CD14-positive monocyte (primary cell): ENCODE measurements at regions of chr3 and their contacts with region 1.

Region 1: DNA sequence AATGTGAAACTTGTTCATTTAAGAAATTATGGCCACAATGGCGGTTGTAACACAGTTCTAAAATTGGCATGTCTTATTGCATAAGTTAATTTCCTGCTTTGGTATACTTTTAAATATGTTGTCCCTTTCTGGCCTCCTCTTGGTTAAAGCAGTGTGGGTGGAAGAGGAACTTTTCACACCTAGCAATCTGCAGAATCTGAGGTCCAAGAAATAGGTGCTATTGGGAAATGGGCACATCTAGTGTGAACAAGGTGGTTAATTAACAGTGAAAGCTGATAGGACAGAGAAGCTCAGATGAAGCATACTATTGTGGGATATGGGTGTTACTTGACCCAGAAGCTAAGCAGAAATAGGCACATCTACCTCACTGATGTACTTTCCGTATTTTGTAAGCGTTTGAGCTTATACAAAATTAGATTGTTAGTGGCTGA is 10.6 kb downstream of the CMC1 start:
- DNase-seq: peak in 2 of 3 donors; percentile 21 to 34
- H3K4me3 ChIP-seq: peak overlapping the region in 2 of 3 experiments; percentile 12 to 46
- H3K4me3 Mint-ChIP-seq: peak overlapping the region; percentile 62 to 73
- H3K27ac ChIP-seq: peak overlapping the region in 1 of 2 donors; percentile 78
- H3K27ac Mint-ChIP-seq: peak overlapping the region; percentile 63 to 90 (median 85)
- H3K4me1 ChIP-seq: peaks cover 40 to 50% of the 10 kb centered on the region in 2 donors
- H3K4me1 Mint-ChIP-seq: peaks cover 55% of the 10 kb centered on the region
- H3K27me3 ChIP-seq: no peaks in the 10 kb centered on the region
- H3K27me3 Mint-ChIP-seq: no peaks in the 10 kb centered on the region
- CTCF ChIP-seq: no peak

Region 2: DNA sequence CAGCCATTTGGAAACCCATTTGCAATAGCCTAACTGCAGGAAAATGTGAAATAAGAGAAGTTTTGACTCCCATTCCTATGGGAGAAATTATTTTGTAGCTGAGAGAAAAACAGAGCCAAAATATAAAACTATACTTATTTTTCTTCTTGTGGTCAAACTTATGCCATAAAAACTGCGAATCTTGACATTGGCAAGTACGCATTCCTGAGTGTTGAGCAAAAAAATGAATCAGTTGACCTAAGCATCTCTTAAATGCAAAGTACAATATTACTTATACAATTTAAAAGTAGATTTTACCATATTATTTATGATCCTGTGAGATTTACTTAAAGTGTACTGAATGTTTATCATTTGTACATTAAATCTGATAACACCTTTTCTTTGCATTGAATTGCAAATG is 60.7 kb before region 1 on chr3:
- intact Hi-C with region 1: no loop called
- DNase-seq: no peak
- H3K4me3 ChIP-seq: no peak overlapping the region
- H3K4me3 Mint-ChIP-seq: no peak overlapping the region
- H3K27ac ChIP-seq: no peak overlapping the region
- H3K27ac Mint-ChIP-seq: no peak overlapping the region
- H3K4me1 ChIP-seq: no peaks in the 10 kb centered on the region
- H3K4me1 Mint-ChIP-seq: peaks cover 3% of the 10 kb centered on the region
- H3K27me3 ChIP-seq: no peaks in the 10 kb centered on the region
- H3K27me3 Mint-ChIP-seq: peaks cover 0 to 3% (median 0%) of the 10 kb centered on the region in 3 donors
- CTCF ChIP-seq: no peak

Region 3: DNA sequence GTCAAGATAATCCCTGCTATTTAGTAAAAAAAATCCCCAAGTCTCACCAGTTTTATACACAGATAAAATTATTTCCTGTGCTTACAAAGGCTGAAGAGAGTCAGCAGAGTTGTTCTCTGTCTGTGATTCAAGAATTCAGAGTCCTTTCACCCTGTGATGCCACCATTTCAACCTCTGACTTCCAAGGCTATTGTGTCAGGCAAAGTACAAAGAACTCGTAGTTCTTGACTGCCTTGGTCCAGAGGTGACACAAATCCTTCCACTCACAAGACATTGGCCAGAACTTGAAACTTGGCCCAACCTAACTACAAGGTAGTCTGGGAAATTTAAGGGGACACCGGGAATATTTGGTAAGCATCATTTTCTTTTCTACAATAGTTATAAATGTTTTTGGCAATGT is 45.5 kb before region 1 on chr3:
- intact Hi-C with region 1: no loop called
- DNase-seq: no peak
- H3K4me3 ChIP-seq: no peak overlapping the region
- H3K4me3 Mint-ChIP-seq: no peak overlapping the region
- H3K27ac ChIP-seq: no peak overlapping the region
- H3K27ac Mint-ChIP-seq: no peak overlapping the region
- H3K4me1 ChIP-seq: no peaks in the 10 kb centered on the region
- H3K4me1 Mint-ChIP-seq: no peaks in the 10 kb centered on the region
- H3K27me3 ChIP-seq: no peaks in the 10 kb centered on the region
- H3K27me3 Mint-ChIP-seq: peaks cover 0 to 3% (median 0%) of the 10 kb centered on the region in 3 donors
- CTCF ChIP-seq: no peak

Region 4: DNA sequence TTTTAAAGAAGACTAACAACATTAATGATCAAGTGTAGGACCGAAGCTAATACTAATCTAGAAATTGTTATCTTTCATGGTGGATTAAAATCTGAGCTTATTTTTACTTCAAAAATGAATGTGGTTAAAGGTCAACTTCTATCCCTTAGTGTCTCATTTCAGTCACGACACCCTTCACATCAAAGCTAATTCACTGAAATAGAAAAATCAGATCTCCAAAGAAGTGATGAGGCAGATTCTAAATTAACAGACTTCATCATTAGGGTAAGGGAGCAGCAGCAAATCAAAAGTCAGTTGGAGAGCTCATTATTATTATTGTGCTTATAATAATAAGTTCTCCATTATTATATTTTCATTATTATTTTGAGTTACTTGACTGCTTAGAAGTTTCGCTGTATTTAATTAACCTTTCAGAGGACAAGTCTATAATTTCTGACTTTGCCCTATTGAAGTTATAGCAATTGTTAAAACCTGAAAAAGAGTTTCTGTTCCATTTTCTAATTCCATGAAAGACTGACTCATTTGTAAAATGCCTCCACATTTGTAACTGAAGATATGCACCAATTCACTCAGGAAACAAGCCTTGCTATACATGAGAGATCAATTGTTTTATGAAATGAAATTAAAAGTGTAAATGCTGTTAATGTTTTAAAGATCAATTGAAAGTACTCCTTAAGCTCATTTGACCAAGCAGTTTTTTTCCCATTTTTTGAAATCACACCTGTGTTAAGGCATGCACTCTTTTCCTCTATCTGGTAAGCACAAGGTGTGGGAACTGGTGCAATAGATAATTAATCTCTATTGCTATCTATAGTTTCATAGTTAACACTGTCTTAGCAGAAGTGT is 33.7 kb before region 1 on chr3:
- intact Hi-C with region 1: no loop called
- DNase-seq: no peak
- H3K4me3 ChIP-seq: no peak overlapping the region
- H3K4me3 Mint-ChIP-seq: no peak overlapping the region
- H3K27ac ChIP-seq: no peak overlapping the region
- H3K27ac Mint-ChIP-seq: no peak overlapping the region
- H3K4me1 ChIP-seq: no peaks in the 10 kb centered on the region
- H3K4me1 Mint-ChIP-seq: no peaks in the 10 kb centered on the region
- H3K27me3 ChIP-seq: no peaks in the 10 kb centered on the region
- H3K27me3 Mint-ChIP-seq: peaks cover 0 to 4% (median 2%) of the 10 kb centered on the region in 3 donors
- CTCF ChIP-seq: no peak

Region 5: DNA sequence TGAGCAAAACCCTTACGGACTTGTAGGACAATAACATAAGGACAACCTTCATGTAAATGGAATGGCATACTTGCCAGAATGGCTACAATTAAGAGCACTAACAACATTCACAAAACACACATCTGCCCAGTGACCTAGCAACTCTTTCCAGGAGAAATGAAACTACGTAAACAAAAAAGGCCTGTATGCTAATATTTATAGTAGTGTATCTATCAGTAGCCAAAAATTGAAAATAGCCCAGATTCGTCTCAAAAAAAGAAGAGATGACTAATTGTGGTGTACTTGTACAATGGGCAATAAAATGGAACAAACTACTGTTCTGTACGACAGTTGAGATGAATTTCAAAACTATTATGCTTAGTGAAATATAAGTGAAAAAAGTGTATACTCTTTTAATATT is 27.8 kb after region 1 on chr3:
- intact Hi-C with region 1: no loop called
- DNase-seq: no peak
- H3K4me3 ChIP-seq: no peak overlapping the region
- H3K4me3 Mint-ChIP-seq: no peak overlapping the region
- H3K27ac ChIP-seq: no peak overlapping the region
- H3K27ac Mint-ChIP-seq: no peak overlapping the region
- H3K4me1 ChIP-seq: no peaks in the 10 kb centered on the region
- H3K4me1 Mint-ChIP-seq: peaks cover 10% of the 10 kb centered on the region
- H3K27me3 ChIP-seq: no peaks in the 10 kb centered on the region
- H3K27me3 Mint-ChIP-seq: peaks cover 0 to under 1% (median 0%) of the 10 kb centered on the region in 3 donors
- CTCF ChIP-seq: no peak

Region 6: DNA sequence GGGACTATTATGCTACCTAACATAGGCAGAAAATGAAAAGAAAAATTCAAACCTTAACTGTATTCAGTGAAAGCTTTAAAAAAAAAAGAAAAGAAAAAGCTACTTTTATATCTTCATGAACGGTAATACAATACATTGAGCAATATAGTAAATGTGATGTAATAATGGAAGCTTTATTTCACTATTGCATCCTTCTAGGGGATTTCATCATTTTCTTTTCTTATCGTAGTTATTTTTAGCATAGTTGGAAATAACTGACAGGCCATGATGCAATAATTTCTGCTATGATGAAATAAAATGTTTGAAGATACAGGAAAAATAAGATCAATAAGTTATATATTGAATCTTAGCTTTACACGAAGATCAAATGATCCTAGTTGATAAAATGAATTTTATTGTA is 56.2 kb after region 1 on chr3:
- intact Hi-C with region 1: loop called in 1 of 2 experiments (anchors 10 kb)
- DNase-seq: peak; percentile 45 to 81 (median 74)
- H3K4me3 ChIP-seq: peak overlapping the region in 1 of 3 experiments; percentile 54
- H3K4me3 Mint-ChIP-seq: peak overlapping the region; percentile 13 to 63
- H3K27ac ChIP-seq: peak overlapping the region in 1 of 2 donors; percentile 70
- H3K27ac Mint-ChIP-seq: peak overlapping the region; percentile 78 to 93 (median 84)
- H3K4me1 ChIP-seq: peaks cover 6 to 10% of the 10 kb centered on the region in 2 donors
- H3K4me1 Mint-ChIP-seq: peaks cover 12% of the 10 kb centered on the region
- H3K27me3 ChIP-seq: no peaks in the 10 kb centered on the region
- H3K27me3 Mint-ChIP-seq: no peaks in the 10 kb centered on the region
- CTCF ChIP-seq: no peak

Region 7: GRCh38 chr3:28348629-28349483 is 96.8 kb after region 1 on chr3 and contains the starts of genes AZI2 and ZCWPW2:
- intact Hi-C with region 1: loop called in 1 of 2 experiments (anchors 5 kb)
- DNase-seq: peak; percentile 88 to 93 (median 92)
- H3K4me3 ChIP-seq: peak within 1 kb of the TSS; percentile 86 to 99 (median 94)
- H3K4me3 Mint-ChIP-seq: peak within 1 kb of the TSS; percentile 89 to 94
- H3K27ac ChIP-seq: peak within 1 kb of the TSS; percentile 100
- H3K27ac Mint-ChIP-seq: peak within 1 kb of the TSS; percentile 98 to 100 (median 100)
- H3K4me1 ChIP-seq: peaks cover 29 to 51% of the 10 kb centered on the region in 2 donors
- H3K4me1 Mint-ChIP-seq: peaks cover 36% of the 10 kb centered on the region
- H3K27me3 ChIP-seq: no peaks in the 10 kb centered on the region
- H3K27me3 Mint-ChIP-seq: peaks cover 0 to 2% (median 1%) of the 10 kb centered on the region in 3 donors
- CTCF ChIP-seq: no peak
- polyA plus RNA-seq, gene AZI2: 57.4 to 134 (median 99.3) TPM
- polyA plus RNA-seq, gene ZCWPW2: 0.07 to 0.41 (median 0.35) TPM